Activated B cell treated with CpG ODN at 0.5 μM for 24 hours (primary cell): ENCODE measurements at regions of chr22 and their contacts with region 1.

Region 1: DNA sequence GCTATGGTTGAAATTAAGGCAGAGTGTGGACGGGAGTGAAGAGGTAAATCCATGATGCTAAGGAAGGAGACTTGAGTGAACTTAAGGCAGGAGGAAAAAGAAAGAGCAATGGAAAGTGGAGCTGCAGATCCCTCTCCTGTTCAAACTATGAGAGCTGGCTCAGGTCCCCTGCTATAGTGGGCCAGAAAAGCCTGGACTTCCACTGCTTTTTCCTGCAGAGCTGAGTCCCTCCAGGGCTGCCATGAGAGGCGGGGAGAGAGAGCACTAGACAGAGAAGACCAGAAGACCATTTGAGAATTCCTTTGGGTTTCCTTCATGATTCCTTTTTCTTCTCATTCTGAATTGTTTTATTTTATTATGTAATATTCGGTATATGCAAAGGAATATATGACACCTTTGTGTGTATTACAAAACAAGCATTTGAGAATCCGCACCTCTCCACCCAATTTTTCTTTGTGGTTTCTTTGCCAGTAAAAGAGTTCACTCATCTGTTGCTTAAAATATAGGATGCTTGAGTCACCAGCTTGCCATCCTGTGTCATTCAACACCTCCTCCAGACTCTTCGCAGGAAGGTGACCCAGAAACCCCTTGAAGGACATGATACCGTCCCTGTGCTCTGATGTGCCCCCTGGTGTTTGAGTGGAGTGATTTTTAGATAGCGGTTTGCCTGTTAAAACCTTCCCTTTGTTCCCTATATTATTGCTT is 24.4 kb downstream of the SREBF2 start:
- DNase-seq: no peak
- ATAC-seq: peak; percentile 18
- H3K4me3 Mint-ChIP-seq: peak overlapping the region; percentile 45
- H3K27ac Mint-ChIP-seq: peak overlapping the region; percentile 77
- H3K4me1 Mint-ChIP-seq: peaks cover 72% of the 10 kb centered on the region
- H3K27me3 Mint-ChIP-seq: no peaks in the 10 kb centered on the region
- CTCF ChIP-seq: no peak

Region 2: GRCh38 chr22:41746567-41747400 is 110.5 kb before region 1 on chr22:
- CTCF ChIA-PET with region 1: interaction called, 7 read pairs
- POLR2A ChIA-PET with region 1: interaction called, 11 read pairs
- intact Hi-C with region 1: loop called (anchors 5 kb)
- DNase-seq: peak; percentile 18
- ATAC-seq: peak; percentile 96
- H3K4me3 Mint-ChIP-seq: peak overlapping the region; percentile 38
- H3K27ac Mint-ChIP-seq: peak overlapping the region; percentile 69
- H3K4me1 Mint-ChIP-seq: peaks cover 31% of the 10 kb centered on the region
- H3K27me3 Mint-ChIP-seq: no peaks in the 10 kb centered on the region
- CTCF ChIP-seq: no peak

Region 3: GRCh38 chr22:41841085-41841659 is 16.1 kb before region 1 on chr22:
- CTCF ChIA-PET with region 1: interaction called, 3 read pairs
- POLR2A ChIA-PET with region 1: interaction called, 166 read pairs
- intact Hi-C with region 1: no loop called
- DNase-seq: no peak
- ATAC-seq: no peak
- H3K4me3 Mint-ChIP-seq: no peak overlapping the region
- H3K27ac Mint-ChIP-seq: peak overlapping the region; percentile 46
- H3K4me1 Mint-ChIP-seq: peaks cover 85% of the 10 kb centered on the region
- H3K27me3 Mint-ChIP-seq: no peaks in the 10 kb centered on the region
- CTCF ChIP-seq: no peak

Region 4: GRCh38 chr22:41883400-41883799 is 26.1 kb after region 1 on chr22:
- CTCF ChIA-PET with region 1: no interaction called
- POLR2A ChIA-PET with region 1: interaction called, 11 read pairs
- intact Hi-C with region 1: loop called (anchors 2 kb)
- DNase-seq: no peak
- ATAC-seq: no peak
- H3K4me3 Mint-ChIP-seq: no peak overlapping the region
- H3K27ac Mint-ChIP-seq: peak overlapping the region; percentile 63
- H3K4me1 Mint-ChIP-seq: peaks cover 63% of the 10 kb centered on the region
- H3K27me3 Mint-ChIP-seq: no peaks in the 10 kb centered on the region
- CTCF ChIP-seq: no peak

Region 5: DNA sequence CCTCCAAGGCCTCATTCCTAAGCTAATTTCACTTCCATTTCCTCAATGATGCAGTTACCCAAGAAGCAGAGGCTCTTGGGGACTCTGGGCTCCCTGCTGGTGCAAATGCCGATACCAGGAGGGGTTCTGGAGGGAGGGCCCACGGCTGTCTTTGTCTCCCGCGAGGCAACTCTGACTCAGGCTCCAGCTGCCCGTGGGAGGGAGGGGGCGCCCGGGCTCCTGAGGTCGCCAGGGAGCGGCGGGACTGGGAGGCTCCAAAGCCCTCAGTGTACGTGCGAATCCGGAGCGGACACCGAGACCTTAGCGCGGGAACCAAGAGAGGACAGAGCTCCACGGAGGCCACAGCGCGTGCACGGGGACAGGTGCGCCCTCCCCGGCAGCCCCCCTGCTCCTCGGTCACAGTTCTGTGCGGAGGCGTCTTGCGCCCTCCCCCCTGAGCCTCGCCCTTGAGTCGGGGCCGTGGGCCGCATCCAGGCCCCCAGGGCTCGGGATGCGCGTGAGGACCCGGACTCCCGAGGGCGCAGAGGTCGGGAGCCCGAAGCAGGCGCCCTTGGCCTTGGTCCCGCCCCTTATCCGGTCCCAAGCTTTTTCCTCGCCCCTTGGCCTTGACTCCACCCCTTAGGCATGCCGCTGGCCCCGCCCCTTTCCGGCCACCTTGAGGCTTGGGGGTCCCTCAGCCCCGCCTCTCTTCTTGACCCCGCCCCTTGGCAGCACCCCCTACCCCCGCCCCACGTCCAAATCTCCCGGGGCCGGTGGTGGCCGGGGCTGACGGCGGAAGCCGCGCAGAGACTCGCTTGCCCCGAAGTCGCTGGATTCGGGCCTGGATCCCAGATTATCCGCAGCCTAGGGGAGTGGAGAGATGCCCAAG is 62.3 kb after region 1 on chr22:
- CTCF ChIA-PET with region 1: no interaction called
- POLR2A ChIA-PET with region 1: interaction called, 61 read pairs
- intact Hi-C with region 1: no loop called
- DNase-seq: peak; percentile 82
- ATAC-seq: peak; percentile 53
- H3K4me3 Mint-ChIP-seq: peak overlapping the region; percentile 82
- H3K27ac Mint-ChIP-seq: peak overlapping the region; percentile 94
- H3K4me1 Mint-ChIP-seq: peaks cover 88% of the 10 kb centered on the region
- H3K27me3 Mint-ChIP-seq: no peaks in the 10 kb centered on the region
- CTCF ChIP-seq: no peak

Region 6: DNA sequence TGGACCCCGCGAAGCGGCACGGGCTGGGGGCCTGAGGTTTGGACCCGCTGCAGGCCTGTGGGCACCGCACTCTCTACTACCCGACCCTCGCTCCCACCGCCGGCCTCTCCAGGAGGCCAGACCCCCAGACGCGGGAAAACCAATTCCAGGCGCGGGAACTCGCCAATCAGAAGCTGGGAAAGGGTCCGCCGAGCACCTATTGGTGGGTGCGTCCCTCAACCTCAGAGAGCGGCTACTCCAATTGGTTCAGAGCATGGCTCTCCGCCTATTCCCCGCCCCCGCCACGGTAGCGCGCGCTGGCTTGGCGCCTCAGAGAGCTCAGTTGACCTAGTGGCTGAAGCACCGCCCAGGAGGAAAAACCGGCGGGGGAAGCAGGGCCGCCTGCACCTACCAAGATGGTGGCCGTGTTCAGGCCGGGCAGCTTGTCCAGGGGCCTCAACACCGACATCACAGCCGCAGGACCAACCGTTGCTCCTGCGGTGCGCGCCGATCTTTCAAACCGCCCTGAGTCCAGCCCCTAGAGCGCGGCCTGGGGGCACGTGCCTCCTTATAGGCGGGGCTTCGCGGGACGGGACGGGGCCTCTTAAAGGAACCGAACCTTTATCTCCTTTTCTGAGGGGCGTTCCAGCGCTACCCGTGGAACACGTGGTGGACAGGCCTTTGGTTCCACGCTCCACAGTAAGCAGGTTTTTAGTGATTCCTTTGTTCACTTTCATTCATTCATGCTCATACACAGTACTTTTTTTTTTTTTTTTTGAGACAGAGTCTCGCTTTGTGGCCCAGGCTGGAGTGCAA is 89.5 kb after region 1 on chr22 and contains the start of gene CENPM:
- CTCF ChIA-PET with region 1: interaction called, 27 read pairs
- POLR2A ChIA-PET with region 1: interaction called, 12 read pairs
- intact Hi-C with region 1: no loop called
- DNase-seq: peak; percentile 84
- ATAC-seq: peak; percentile 91
- H3K4me3 Mint-ChIP-seq: peak within 1 kb of the TSS; percentile 91
- H3K27ac Mint-ChIP-seq: peak within 1 kb of the TSS; percentile 80
- H3K4me1 Mint-ChIP-seq: peaks cover 52% of the 10 kb centered on the region
- H3K27me3 Mint-ChIP-seq: no peaks in the 10 kb centered on the region
- CTCF ChIP-seq: no peak
- total RNA-seq, gene CENPM: 9.6 and 13.3 TPM in 2 replicates

Region 7: GRCh38 chr22:42072606-42073285 is 215.4 kb after region 1 on chr22:
- CTCF ChIA-PET with region 1: no interaction called
- POLR2A ChIA-PET with region 1: no interaction called
- intact Hi-C with region 1: no loop called
- DNase-seq: no peak
- ATAC-seq: no peak
- H3K4me3 Mint-ChIP-seq: peak overlapping the region; percentile 75
- H3K27ac Mint-ChIP-seq: peak overlapping the region; percentile 18
- H3K4me1 Mint-ChIP-seq: peaks cover 32% of the 10 kb centered on the region
- H3K27me3 Mint-ChIP-seq: no peaks in the 10 kb centered on the region
- CTCF ChIP-seq: no peak